Head of caudate nucleus (tissue), 42 donors: ENCODE measurements at regions of chr15 and their contacts with region 1.

Region 1: GRCh38 chr15:67839929-67840748 is at the start of gene RNU6-1:
- DNase-seq: peak; percentile 89 to 98 (median 96)

Region 2: DNA sequence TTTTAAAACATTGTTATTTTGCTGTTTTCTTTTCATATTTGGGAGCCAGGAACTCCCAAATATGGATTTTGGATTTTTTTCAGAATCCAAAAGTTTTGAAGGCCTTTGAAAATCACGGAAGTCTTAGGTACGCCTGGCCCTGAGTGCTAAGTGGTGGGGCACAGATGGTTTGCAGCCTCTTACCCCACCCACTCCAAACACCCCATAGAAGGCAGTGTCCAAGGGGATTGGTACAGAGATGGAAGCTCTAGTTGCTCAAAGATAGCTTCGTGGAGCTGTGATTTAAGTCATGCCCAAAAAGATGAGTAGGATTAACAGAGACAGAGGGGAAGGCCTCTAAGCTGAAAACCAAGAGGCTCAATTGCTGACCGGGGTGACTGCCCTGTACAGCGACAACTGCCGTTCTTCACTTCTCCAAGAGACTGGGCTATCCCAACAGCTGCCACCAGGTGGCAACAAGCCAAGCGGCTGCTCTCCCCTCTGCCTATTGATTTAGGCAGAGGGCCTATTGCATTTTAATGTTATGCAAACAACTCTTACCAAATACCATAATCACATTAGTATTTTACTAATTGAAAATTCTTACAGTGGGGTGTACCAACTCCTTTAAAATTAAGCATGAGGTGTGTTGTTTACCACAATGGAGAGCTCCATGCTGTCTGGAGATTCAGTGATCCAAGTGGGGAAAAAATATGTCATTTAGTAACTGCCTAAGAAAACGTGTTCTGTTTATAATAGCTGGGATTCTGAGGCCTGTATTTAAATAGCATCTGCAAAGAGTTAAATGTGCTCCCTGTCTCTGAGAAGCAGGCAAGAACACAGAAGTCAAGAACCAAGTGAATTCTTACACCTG is 383.2 kb before region 1 on chr15:
- intact Hi-C with region 1: loop called (anchors 5 kb)
- DNase-seq: peak; percentile 73 to 96 (median 88)

Region 3: DNA sequence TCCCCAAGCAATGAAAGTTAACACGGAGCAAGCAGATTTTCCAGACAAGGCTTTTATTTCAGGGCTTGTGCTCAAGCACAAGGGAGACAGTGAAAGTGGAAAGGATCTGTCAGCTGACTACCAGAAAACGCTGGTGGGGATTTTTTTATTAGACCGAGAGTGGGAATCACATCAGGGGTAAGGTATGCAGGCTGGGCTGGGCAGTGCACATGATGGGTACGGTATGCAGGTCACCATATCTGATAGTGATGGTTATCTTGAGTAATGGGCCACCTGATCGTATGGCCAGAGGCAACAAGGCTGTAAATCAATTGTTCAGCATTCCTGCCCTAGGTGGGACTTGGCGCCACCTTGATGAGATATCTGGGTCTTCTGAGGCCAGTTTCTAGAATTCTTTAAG is 177.1 kb after region 1 on chr15:
- intact Hi-C with region 1: no loop called
- DNase-seq: no peak